ENCODE measurements at regions of chr3 and their contacts with region 1.

Region 1: DNA sequence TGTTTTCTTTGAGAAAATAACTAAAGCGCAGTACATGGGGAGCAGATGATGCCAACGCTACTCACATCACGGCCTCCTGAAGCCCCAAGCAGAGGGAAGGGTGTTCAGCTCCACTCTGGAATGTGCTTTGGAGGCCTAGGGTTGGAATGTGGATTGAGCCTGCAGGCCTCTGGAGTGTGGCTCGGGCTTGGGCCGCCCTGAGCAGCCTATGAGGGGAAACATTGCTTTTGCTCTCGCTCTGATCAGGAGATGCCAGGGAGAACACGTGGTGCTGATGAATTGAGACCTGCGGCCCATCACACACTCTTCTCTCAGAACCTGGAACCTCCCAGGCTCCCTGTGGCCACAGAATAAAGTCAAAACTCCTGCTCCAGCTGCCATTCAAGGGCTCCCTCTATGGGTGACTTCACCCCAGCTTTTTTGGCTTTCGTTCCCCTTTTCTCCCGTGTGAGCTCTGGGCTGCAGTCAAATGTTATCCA is 23.3 kb downstream of the CCDC13 start:
- DNase-seq: peak in 1 of 2 donors; percentile 63
- H3K4me3 ChIP-seq: no peak overlapping the region
- H3K27ac ChIP-seq: peak overlapping the region; percentile 53 to 62
- H3K4me1 ChIP-seq: peaks cover 10 to 31% of the 10 kb centered on the region in 2 donors
- H3K27me3 ChIP-seq: no peaks in the 10 kb centered on the region
- CTCF ChIP-seq: peak in 2 of 3 experiments; percentile 37 to 68

Region 2: GRCh38 chr3:42502429-42503250 is 247.2 kb before region 1 on chr3 and contains the start of gene VIPR1:
- intact Hi-C with region 1: loop called (anchors 5 kb)
- DNase-seq: peak in 1 of 2 donors; percentile 81
- H3K4me3 ChIP-seq: peak within 1 kb of the TSS; percentile 66 to 67
- H3K27ac ChIP-seq: peak within 1 kb of the TSS in 1 of 2 donors; percentile 29
- H3K4me1 ChIP-seq: peaks cover 2 to 5% of the 10 kb centered on the region in 2 donors
- H3K27me3 ChIP-seq: no peaks in the 10 kb centered on the region
- CTCF ChIP-seq: no peak
- total RNA-seq, gene VIPR1: 3.5 TPM

Region 3: GRCh38 chr3:42581709-42582473 is 167.9 kb before region 1 on chr3 and contains the start of gene SEC22C:
- intact Hi-C with region 1: loop called (anchors 2 kb)
- DNase-seq: peak; percentile 84 to 98
- H3K4me3 ChIP-seq: peak within 1 kb of the TSS; percentile 86 to 96
- H3K27ac ChIP-seq: peak within 1 kb of the TSS; percentile 84 to 90
- H3K4me1 ChIP-seq: peaks cover 0 to 16% of the 10 kb centered on the region in 2 donors
- H3K27me3 ChIP-seq: no peaks in the 10 kb centered on the region
- CTCF ChIP-seq: peak in 2 of 3 experiments; percentile 16 to 49
- total RNA-seq, gene SEC22C: 28.3 TPM

Region 4: DNA sequence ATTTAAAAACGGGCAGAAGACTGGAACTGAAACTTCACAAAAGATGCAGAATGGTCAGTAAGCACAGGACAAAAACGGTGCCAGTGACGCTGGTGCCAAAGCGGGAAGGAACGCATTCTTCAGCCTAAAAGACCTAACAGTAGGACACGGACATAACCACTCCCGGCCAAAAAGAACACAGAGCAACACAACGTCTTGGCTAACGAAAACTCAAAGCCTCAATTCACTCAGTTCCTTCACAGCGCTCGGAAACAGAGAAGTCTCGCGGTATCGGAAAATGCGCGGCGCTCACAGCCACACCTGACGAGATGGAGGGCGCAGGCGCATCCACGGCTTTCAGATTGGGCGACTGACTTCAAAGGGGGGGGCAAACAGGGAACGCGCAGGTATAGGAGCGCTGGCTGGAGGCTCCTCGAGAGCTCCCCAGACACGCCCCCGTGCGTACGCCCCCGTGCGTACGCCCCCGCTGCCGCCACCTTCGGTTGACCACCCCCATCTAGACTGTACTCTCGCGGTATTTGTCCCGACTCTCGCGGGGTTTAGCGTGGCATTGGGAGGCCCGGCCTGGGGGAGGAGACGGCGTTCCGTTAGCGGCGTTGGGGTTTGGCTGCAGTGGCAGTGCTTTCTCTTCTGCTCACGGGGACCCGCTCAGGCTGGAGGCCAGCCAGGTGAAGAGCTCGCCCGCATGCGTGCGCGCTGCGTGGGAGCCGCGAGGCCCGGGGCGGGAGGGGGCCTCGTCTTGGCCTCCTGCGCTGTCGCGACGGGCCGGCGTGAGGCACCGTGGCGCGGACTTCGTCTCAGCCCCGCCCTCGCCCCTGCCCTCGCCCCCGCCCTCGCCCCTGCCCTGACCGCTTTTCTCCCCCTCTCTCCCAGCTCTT is 149.4 kb before region 1 on chr3 and contains the start of gene NKTR:
- intact Hi-C with region 1: loop called (anchors 5 kb)
- DNase-seq: peak; percentile 89 to 97
- H3K4me3 ChIP-seq: peak within 1 kb of the TSS; percentile 85 to 89
- H3K27ac ChIP-seq: peak within 1 kb of the TSS; percentile 95 to 97
- H3K4me1 ChIP-seq: peaks cover 0 to 11% of the 10 kb centered on the region in 2 donors
- H3K27me3 ChIP-seq: no peaks in the 10 kb centered on the region
- CTCF ChIP-seq: no peak
- total RNA-seq, gene NKTR: 41.7 TPM

Region 5: GRCh38 chr3:42654331-42655201 is 95.2 kb before region 1 on chr3:
- intact Hi-C with region 1: loop called (anchors 2 kb)
- DNase-seq: peak in 1 of 2 donors; percentile 85
- H3K4me3 ChIP-seq: peak overlapping the region; percentile 85 to 98
- H3K27ac ChIP-seq: peak overlapping the region; percentile 97 to 99
- H3K4me1 ChIP-seq: peaks cover 22 to 52% of the 10 kb centered on the region in 2 donors
- H3K27me3 ChIP-seq: no peaks in the 10 kb centered on the region
- CTCF ChIP-seq: peak; percentile 7 to 34 (median 21)

Region 6: DNA sequence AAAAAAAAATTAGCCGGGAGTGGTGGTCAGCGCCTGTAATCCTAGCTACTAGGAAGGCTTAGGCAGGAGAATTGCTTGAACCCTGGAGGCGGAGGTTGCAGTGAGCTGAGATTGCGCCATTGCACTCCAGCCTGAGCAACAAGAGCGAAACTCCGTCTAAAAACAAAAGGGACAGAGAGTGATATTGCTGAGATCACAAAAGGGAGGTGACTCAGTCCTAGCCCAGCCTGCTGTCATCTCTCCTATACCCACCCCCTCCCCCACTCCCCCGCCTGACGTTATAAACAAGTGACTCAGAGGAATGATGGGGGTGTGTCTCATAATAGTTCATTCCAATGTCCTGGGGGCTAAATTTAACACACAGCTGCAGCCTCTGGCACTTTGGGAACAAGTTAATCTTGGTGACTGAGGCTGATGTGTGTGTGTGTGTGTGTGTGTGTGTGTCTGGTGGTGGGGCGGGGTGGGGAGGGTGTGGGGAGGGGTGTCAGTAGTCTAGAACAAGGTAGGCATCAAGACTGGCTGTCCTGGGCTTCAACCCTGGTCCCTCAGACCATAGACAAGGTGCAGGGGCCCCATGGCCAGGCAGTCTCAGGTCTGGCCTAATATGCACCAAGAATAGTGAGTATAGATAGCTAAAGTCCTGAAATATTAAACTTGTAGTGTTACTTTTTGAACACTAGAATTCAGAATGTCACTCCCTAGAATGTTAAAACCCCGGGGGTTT is 65.8 kb before region 1 on chr3:
- intact Hi-C with region 1: loop called (anchors 2 kb)
- DNase-seq: peak; percentile 81 to 96
- H3K4me3 ChIP-seq: no peak overlapping the region
- H3K27ac ChIP-seq: peak overlapping the region; percentile 87 to 91
- H3K4me1 ChIP-seq: peaks cover 7 to 28% of the 10 kb centered on the region in 2 donors
- H3K27me3 ChIP-seq: no peaks in the 10 kb centered on the region
- CTCF ChIP-seq: no peak

Region 7: DNA sequence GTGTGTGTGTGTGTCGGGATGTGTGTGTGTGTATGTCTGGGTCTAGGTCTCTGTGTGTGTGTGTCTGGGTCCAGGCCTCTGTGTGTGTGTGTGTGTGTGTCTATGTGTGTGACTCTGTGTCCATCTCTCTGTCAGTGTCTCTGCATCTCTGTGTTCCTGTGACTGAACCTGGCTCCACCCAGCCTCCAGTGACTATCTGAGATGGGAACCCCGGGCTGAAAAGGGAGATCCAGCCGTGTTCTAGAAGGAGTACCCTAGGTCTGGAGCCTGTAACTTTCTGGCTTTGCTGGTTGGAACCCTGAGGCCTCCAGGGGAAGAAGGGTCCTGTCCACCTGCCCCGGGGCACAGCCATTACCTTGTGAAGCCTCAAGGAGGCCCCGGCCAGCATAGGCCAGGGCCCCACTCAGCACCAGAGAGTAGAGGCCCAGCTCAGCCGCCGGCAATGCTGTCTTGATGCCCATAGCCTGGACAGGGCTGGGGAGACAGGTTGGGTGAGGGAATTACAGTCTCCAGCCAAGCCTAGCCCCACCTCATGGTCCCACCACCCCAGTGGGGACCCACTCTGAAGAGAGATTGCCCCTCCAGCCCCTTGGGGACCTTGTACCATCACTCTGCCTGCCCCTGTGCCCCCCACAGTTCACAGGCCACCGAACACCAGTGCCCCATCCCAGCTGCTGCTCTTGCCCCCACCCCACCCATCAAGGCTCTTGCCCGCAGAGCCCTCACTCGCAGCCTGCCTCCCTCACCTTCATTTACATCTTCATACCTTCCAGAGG is 49.2 kb before region 1 on chr3:
- intact Hi-C with region 1: loop called (anchors 1 kb)
- DNase-seq: peak in 1 of 2 donors; percentile 53
- H3K4me3 ChIP-seq: no peak overlapping the region
- H3K27ac ChIP-seq: no peak overlapping the region
- H3K4me1 ChIP-seq: peaks cover 0 to 2% of the 10 kb centered on the region in 2 donors
- H3K27me3 ChIP-seq: no peaks in the 10 kb centered on the region
- CTCF ChIP-seq: no peak

Measured in ascending aorta (tissue), 2 donors.